Mammary epithelial cell (primary cell): ENCODE measurements at regions of chr7 and their contacts with region 1.

Region 1: GRCh38 chr7:5406957-5407945 is 16.4 kb downstream of the TNRC18 start:
- DNase-seq: no peak
- H3K4me3 ChIP-seq: no peak overlapping the region
- H3K27ac ChIP-seq: no peak overlapping the region
- H3K4me1 ChIP-seq: peaks cover 8% of the 10 kb centered on the region
- H3K27me3 ChIP-seq: no peaks in the 10 kb centered on the region
- CTCF ChIP-seq: no peak

Region 2: GRCh38 chr7:4895766-4896165 is 511.5 kb before region 1 on chr7:
- CTCF ChIA-PET with region 1: no interaction called
- dilution Hi-C with region 1: no loop called
- in situ Hi-C with region 1: no loop called
- intact Hi-C with region 1: no loop called
- DNase-seq: no peak
- H3K4me3 ChIP-seq: no peak overlapping the region
- H3K27ac ChIP-seq: no peak overlapping the region
- H3K4me1 ChIP-seq: no peaks in the 10 kb centered on the region
- H3K27me3 ChIP-seq: no peaks in the 10 kb centered on the region
- CTCF ChIP-seq: no peak

Region 3: DNA sequence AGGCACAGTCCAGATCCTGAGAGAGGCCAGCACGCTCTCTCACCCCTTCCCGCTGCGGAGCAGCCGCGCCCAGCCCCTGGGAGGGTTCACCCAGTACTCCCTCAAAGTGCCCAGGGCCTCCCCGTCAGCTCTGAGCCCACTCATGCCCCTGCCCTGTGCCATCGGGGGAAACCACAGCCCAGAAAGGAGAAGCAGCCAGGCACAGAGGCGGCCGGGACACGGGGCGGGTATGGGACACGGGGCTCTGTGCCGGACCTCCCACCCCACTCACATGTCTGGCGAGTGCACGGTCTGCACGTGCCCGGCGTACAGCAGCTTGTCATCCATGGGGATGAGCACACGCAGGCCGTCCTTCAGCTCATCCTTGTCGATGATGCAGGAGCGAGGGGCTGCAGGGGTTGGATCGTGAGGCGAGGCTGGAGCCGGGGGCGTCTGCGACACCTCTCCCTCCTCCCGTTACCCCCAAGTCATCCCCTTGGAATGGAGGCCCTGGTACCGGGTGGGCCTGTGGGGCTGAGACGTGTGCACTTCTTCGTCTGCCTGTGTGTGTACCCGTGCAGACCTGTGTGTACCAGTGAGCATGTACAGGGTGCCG is 86.4 kb before region 1 on chr7:
- CTCF ChIA-PET with region 1: interaction called, 16 read pairs
- dilution Hi-C with region 1: no loop called
- in situ Hi-C with region 1: no loop called
- intact Hi-C with region 1: no loop called
- DNase-seq: no peak
- H3K4me3 ChIP-seq: no peak overlapping the region
- H3K27ac ChIP-seq: no peak overlapping the region
- H3K4me1 ChIP-seq: no peaks in the 10 kb centered on the region
- H3K27me3 ChIP-seq: no peaks in the 10 kb centered on the region
- CTCF ChIP-seq: no peak

Region 4: DNA sequence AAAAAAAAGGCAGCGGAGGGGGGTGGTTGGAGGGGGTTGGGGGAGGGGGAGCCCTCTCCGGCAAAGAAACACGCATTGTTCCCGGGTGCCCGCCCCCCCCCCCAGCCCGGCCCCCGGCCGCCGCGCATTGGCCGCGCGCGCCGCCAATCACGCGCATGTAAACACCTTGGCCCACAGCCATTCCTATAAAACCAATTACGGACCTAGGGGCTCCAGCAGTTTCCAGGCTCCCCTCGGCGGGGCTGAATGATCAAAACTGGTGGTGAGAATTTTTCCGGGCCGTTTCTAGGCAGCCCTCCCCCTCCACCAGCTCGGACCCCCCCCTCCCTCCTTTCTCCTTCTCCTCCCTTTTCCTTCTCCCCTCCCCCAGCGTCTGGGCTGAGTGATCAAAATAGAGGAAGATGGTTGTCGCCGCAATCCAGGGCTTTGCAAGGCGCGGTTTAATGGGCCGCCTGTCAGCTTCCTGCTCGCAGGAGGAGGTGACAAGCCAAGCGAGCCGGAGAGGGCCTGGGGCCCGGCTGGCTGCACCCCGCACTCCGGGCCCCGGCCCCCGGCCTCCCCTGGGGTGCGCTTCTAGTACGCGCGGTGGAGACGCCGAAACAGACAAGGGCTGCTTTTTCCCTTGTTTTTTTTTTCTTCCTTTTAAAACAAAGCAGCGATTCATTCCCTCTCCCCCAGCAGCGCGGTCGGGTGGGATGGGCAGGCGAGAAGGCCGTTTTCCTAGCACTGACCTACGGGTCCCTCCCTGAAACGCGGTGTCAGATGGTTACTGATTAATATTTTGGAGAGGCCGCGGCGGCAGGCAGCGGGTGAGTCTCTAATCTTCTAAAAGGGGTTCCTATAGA is 16.8 kb after region 1 on chr7:
- CTCF ChIA-PET with region 1: interaction called, 12 read pairs
- dilution Hi-C with region 1: no loop called
- in situ Hi-C with region 1: no loop called
- intact Hi-C with region 1: no loop called
- DNase-seq: peak; percentile 97
- H3K4me3 ChIP-seq: peak overlapping the region; percentile 72 to 99 (median 91)
- H3K27ac ChIP-seq: peak overlapping the region; percentile 84
- H3K4me1 ChIP-seq: peaks cover 11% of the 10 kb centered on the region
- H3K27me3 ChIP-seq: no peaks in the 10 kb centered on the region
- CTCF ChIP-seq: no peak